Panc1 (cell line): ENCODE measurements at regions of chr6 and their contacts with region 1.

Region 1: GRCh38 chr6:156776840-156777576 is at the start of gene ARID1B:
- DNase-seq: peak; percentile 15
- ATAC-seq: peak; percentile 56
- H3K4me3 ChIP-seq: peak within 1 kb of the TSS; percentile 83 to 91
- H3K27ac ChIP-seq: peak within 1 kb of the TSS; percentile 90
- H3K4me1 ChIP-seq: peaks cover 33% of the 10 kb centered on the region
- H3K27me3 ChIP-seq: no peaks in the 10 kb centered on the region
- CTCF ChIP-seq: no peak
- total RNA-seq, gene ARID1B: 91.7 TPM

Region 2: GRCh38 chr6:155327326-155328073 is 1449.5 kb before region 1 on chr6:
- CTCF ChIA-PET with region 1: no interaction called
- POLR2A ChIA-PET with region 1: no interaction called
- in situ Hi-C with region 1: no loop called
- intact Hi-C with region 1: loop called (anchors 5 kb)
- DNase-seq: peak; percentile 55
- ATAC-seq: peak; percentile 77
- H3K4me3 ChIP-seq: no peak overlapping the region
- H3K27ac ChIP-seq: peak overlapping the region; percentile 40; the same call in 1 of the 2 replicates
- H3K4me1 ChIP-seq: no peaks in the 10 kb centered on the region; the same call in 1 of the 2 replicates
- H3K27me3 ChIP-seq: no peaks in the 10 kb centered on the region
- CTCF ChIP-seq: peak; percentile 78

Region 3: DNA sequence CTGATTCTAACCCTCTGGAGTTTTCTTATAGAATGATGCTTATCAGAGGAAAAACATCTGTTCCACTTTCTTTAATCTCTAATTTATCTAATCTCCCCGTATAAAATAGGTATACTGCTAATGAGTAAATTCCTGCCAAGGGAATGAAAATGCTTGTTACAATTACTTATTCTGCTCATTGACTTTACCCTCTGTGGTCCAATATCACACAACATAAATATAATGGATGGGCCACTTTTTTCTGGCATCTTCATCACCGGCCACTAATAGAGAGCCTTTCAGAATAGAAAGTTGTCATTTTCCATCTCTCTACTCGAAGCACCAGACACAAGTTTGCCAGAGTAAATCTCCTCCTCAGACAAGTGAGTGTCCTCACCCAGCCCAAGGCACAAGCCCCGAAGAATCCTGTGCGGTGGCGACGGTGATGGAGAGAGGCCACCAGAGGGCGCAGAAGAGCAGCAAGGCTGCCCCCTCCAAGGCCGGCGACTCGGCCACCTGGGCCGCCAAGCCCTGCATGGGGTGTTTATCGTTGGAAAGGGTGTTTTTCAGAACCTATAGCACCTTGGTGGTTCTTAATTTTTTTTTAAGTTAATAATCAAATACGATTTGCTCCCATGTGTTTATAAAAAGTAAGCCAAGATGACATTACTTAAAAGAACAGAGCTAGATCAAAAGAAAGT is 212.7 kb before region 1 on chr6:
- CTCF ChIA-PET with region 1: interaction called, 3 read pairs
- POLR2A ChIA-PET with region 1: no interaction called
- in situ Hi-C with region 1: no loop called
- intact Hi-C with region 1: loop called (anchors 10 kb)
- DNase-seq: peak; percentile 33
- ATAC-seq: peak; percentile 98
- H3K4me3 ChIP-seq: no peak overlapping the region
- H3K27ac ChIP-seq: no peak overlapping the region; the same call in 1 of the 2 replicates
- H3K4me1 ChIP-seq: no peaks in the 10 kb centered on the region
- H3K27me3 ChIP-seq: no peaks in the 10 kb centered on the region
- CTCF ChIP-seq: peak; percentile 97

Region 4: GRCh38 chr6:156686995-156687788 is 89.8 kb before region 1 on chr6:
- CTCF ChIA-PET with region 1: no interaction called
- POLR2A ChIA-PET with region 1: interaction called, 3 read pairs
- in situ Hi-C with region 1: no loop called
- intact Hi-C with region 1: loop called (anchors 1 kb)
- DNase-seq: no peak
- ATAC-seq: peak; percentile 93
- H3K4me3 ChIP-seq: peak overlapping the region; percentile 63 to 87
- H3K27ac ChIP-seq: peak overlapping the region; percentile 98
- H3K4me1 ChIP-seq: peaks cover 18% of the 10 kb centered on the region
- H3K27me3 ChIP-seq: no peaks in the 10 kb centered on the region; the same call in 1 of the 2 replicates
- CTCF ChIP-seq: no peak

Region 5: GRCh38 chr6:157021344-157021992 is 244.5 kb after region 1 on chr6:
- CTCF ChIA-PET with region 1: no interaction called
- POLR2A ChIA-PET with region 1: no interaction called
- in situ Hi-C with region 1: no loop called
- intact Hi-C with region 1: loop called (anchors 5 kb)
- DNase-seq: no peak
- ATAC-seq: peak; percentile 94
- H3K4me3 ChIP-seq: peak overlapping the region; percentile 78 to 84
- H3K27ac ChIP-seq: peak overlapping the region; percentile 90
- H3K4me1 ChIP-seq: peaks cover 42% of the 10 kb centered on the region
- H3K27me3 ChIP-seq: no peaks in the 10 kb centered on the region
- CTCF ChIP-seq: peak; percentile 70